ENCODE measurements at regions of chr6 and their contacts with region 1.

Region 1: DNA sequence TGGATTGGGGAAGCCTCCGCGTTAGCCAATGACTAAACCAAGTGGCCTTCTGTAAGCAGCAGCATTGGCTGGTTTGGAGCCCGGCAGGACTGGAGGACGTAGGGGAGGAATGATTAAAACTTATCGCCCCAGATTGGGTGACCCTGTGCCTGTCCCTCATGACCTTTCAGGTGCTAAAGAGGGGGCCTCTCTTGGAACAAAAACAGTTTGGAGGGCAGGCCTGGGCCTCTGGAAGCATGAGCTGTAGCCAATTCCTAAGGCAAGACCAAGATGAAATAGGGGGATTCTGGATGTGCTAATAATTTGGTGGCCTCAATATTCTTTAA is 1.4 kb downstream of the GMPR start:
- DNase-seq: peak in 2 of 3 donors; percentile 78 to 81
- ATAC-seq: peak in 1 of 4 donors; percentile 85
- H3K4me3 ChIP-seq: peak overlapping the region in 2 of 3 donors; percentile 61 to 67
- H3K27ac ChIP-seq: peak overlapping the region in 2 of 3 donors; percentile 45 to 68
- H3K4me1 ChIP-seq: peaks cover 0 to 26% (median 3%) of the 10 kb centered on the region in 4 donors
- H3K27me3 ChIP-seq: no peaks in the 10 kb centered on the region
- CTCF ChIP-seq: no peak
- POLR2A ChIP-seq: no peak

Region 2: DNA sequence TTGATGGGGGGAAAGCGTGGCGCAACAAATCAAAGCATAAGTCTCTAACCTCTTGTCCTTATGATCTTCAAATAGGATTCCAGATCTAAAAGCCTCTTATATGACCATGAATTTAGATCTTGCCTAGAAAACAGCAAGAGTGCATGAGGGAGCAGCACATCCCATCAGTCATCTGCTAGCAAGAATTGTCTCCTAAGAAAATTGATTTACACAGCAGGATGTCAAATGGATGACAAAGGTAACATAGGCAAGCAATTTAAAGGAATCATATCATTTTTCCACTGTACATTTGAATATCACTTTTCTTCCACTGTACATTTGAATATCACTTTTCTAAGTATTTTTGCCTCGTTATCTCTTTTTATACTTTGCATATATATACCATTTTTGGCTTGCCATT is 118.4 kb before region 1 on chr6:
- intact Hi-C with region 1: no loop called
- DNase-seq: no peak
- ATAC-seq: no peak
- H3K4me3 ChIP-seq: no peak overlapping the region
- H3K27ac ChIP-seq: no peak overlapping the region
- H3K4me1 ChIP-seq: no peaks in the 10 kb centered on the region
- H3K27me3 ChIP-seq: no peaks in the 10 kb centered on the region
- CTCF ChIP-seq: no peak
- POLR2A ChIP-seq: no peak

Region 3: DNA sequence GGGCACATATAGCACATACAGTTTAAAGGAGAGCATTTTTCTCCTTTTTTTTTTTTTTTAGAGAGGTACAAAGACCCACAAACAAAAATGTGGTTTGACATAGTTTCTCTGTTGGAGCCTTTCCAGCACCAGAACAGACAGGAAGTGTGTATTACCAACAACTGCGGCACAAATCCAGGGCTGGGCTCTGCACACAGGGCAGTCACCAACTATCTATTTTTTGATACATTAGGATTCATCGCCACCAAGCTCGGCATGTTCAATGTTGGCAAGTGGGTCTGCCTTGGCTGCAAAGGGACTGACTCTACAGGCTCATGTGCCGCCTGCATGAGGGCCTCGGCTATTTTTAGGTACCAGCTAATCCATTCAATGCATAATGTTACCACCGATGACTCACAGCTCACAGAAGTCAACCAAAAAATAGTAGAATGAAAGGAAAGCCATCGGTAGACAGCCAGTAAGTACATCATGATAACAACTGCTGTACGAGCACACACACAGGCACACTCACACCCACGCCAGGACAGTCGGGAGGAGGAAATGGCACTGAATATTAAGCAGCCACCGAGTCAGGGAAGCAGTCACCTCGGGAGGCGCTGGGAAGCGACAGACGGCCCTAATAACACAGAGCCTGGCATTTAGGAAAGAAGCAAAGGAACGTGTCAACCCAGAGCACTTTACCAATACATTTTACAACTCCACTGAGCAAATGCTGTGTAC is 80.2 kb after region 1 on chr6:
- intact Hi-C with region 1: loop called in 1 of 2 experiments (anchors 10 kb)
- DNase-seq: peak in 1 of 3 donors; percentile 31
- ATAC-seq: peak; percentile 39 to 65 (median 53)
- H3K4me3 ChIP-seq: no peak overlapping the region
- H3K27ac ChIP-seq: peak overlapping the region; percentile 13 to 51 (median 42)
- H3K4me1 ChIP-seq: no peaks in the 10 kb centered on the region
- H3K27me3 ChIP-seq: no peaks in the 10 kb centered on the region
- CTCF ChIP-seq: no peak
- POLR2A ChIP-seq: no peak